Ascending aorta (tissue), 2 donors: ENCODE measurements at regions of chr14 and their contacts with region 1.

Region 1: GRCh38 chr14:55129428-55130195 is 560 bp downstream of the LGALS3 start:
- DNase-seq: peak in 1 of 2 donors; percentile 88
- H3K4me3 ChIP-seq: peak overlapping the region; percentile 77 to 92
- H3K27ac ChIP-seq: peak overlapping the region; percentile 95 to 97
- H3K4me1 ChIP-seq: peaks cover 10 to 34% of the 10 kb centered on the region in 2 donors
- H3K27me3 ChIP-seq: no peaks in the 10 kb centered on the region
- CTCF ChIP-seq: peak in 1 of 3 experiments; percentile 14

Region 2: DNA sequence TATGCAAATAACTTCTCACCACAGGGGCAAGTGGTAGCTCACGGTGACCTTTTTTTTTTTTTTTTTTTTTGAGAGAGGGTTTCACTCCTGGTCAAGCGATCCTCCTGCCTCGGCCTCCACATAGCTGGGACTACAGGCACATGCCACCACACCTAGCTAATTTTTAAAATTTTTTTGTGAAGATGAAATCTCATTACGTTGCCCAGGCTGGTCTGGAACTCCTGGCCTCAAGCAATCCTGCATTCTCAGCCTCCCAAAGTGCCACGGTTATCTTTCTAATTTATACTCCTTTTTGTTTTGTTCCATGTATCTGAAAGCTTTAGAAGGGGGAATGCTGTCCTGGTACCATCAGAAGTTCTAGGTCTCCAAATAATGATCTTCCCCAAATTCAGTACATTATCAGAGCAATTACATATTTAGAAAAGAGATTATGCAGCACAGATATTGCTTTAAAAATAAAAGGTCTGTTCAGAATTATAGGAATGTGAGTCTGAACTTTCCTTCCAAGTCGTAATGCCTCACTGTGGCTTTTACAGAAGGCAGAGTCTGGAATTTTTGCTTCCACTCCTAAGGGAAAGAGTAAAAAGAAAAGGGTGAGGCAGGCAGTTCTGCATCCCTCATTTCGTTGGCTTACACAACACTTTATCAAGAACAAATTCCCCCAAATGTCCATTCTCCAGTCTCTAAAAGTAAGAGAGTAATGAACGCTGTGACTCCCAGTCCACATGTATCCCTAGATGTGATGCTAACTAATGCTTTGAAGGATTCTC is 300.0 kb before region 1 on chr14:
- intact Hi-C with region 1: no loop called
- DNase-seq: no peak
- H3K4me3 ChIP-seq: no peak overlapping the region
- H3K27ac ChIP-seq: no peak overlapping the region
- H3K4me1 ChIP-seq: no peaks in the 10 kb centered on the region
- H3K27me3 ChIP-seq: no peaks in the 10 kb centered on the region
- CTCF ChIP-seq: no peak

Region 3: GRCh38 chr14:55088356-55088755 is 41.3 kb before region 1 on chr14:
- intact Hi-C with region 1: loop called (anchors 2 kb)
- DNase-seq: no peak
- H3K4me3 ChIP-seq: no peak overlapping the region
- H3K27ac ChIP-seq: no peak overlapping the region
- H3K4me1 ChIP-seq: peaks cover 0 to 2% of the 10 kb centered on the region in 2 donors
- H3K27me3 ChIP-seq: no peaks in the 10 kb centered on the region
- CTCF ChIP-seq: no peak

Region 4: GRCh38 chr14:55107766-55108554 is 21.7 kb before region 1 on chr14:
- intact Hi-C with region 1: loop called (anchors 1 kb)
- DNase-seq: peak; percentile 76 to 96
- H3K4me3 ChIP-seq: no peak overlapping the region
- H3K27ac ChIP-seq: peak overlapping the region; percentile 89 to 98
- H3K4me1 ChIP-seq: peaks cover 18 to 28% of the 10 kb centered on the region in 2 donors
- H3K27me3 ChIP-seq: no peaks in the 10 kb centered on the region
- CTCF ChIP-seq: no peak

Region 5: DNA sequence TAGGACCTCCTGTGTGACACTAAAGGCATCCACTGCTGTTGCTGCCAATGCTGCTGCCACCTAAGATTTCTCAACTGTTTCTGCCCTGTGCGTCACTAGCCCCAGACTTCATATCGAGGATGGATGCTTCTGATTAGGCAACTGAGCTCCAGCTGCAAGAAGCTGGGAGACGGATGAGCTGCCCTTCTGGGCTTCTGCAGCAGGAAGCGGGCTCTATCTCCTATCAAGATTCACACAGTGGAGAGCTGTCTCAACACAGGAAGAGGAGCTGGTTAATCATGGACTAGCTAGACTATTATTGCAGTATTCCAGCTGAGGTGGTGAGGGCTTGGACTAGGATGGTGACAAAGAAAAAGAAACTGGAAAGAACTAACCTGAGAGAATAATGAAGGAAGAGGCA is 929.4 kb after region 1 on chr14:
- intact Hi-C with region 1: no loop called
- DNase-seq: no peak
- H3K4me3 ChIP-seq: no peak overlapping the region
- H3K27ac ChIP-seq: no peak overlapping the region
- H3K4me1 ChIP-seq: no peaks in the 10 kb centered on the region
- H3K27me3 ChIP-seq: no peaks in the 10 kb centered on the region
- CTCF ChIP-seq: no peak